ENCODE measurements at regions of chr7 and their contacts with region 1.

Region 1: DNA sequence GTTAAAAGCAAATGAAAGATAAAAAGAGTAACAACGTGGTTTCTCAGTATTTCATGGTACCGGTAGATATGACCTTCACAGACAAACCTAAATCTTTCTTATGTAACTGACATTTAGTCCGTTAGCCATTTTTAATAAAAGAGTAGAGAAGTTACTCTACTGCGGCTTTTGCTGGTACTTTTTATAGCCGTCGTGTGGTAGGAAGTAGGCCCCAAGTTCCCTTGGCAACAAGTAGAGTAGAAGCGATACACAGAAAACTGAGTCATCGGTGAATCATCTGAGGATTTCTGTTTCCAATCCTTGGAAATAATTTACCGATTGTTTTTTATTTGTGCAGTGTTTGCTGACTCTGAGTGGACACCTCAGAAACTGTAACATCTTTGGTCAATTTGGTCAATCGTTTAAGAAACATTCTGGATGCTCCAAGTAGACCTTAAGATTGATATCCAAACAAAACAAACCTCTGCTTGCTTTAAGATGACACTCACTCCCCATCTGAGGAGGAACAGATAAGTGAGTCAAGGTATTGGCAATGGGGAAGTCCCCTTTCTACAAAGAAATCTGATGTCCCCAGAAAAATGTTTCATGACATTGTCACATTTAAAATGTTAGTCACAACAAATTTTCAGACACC is 63.9 kb upstream of the AHR start:
- DNase-seq: peak; percentile 84 to 92 (median 87)
- H3K4me3 ChIP-seq: peak overlapping the region; percentile 8 to 19
- H3K4me3 Mint-ChIP-seq: peak overlapping the region; percentile 73 to 89 (median 84)
- H3K27ac ChIP-seq: peak overlapping the region; percentile 93
- H3K27ac Mint-ChIP-seq: peak overlapping the region; percentile 98 to 100 (median 99)
- H3K4me1 ChIP-seq: peaks cover 34% of the 10 kb centered on the region
- H3K4me1 Mint-ChIP-seq: peaks cover 32 to 51% (median 39%) of the 10 kb centered on the region in 4 donors
- H3K27me3 ChIP-seq: no peaks in the 10 kb centered on the region
- H3K27me3 Mint-ChIP-seq: no peaks in the 10 kb centered on the region

Region 2: GRCh38 chr7:16420649-16421332 is 813.7 kb before region 1 on chr7:
- CTCF ChIA-PET with region 1: no interaction called
- POLR2A ChIA-PET with region 1: no interaction called
- intact Hi-C with region 1: loop called (anchors 2 kb)
- DNase-seq: peak; percentile 87 to 89 (median 88)
- H3K4me3 ChIP-seq: peak overlapping the region; percentile 50 to 63
- H3K4me3 Mint-ChIP-seq: peak overlapping the region; percentile 81 to 94 (median 88)
- H3K27ac ChIP-seq: peak overlapping the region; percentile 64
- H3K27ac Mint-ChIP-seq: peak overlapping the region; percentile 82 to 97 (median 95)
- H3K4me1 ChIP-seq: peaks cover 15% of the 10 kb centered on the region
- H3K4me1 Mint-ChIP-seq: peaks cover 10 to 32% (median 21%) of the 10 kb centered on the region in 4 donors
- H3K27me3 ChIP-seq: no peaks in the 10 kb centered on the region
- H3K27me3 Mint-ChIP-seq: peaks cover 0 to 8% of the 10 kb centered on the region in 2 donors

Region 3: DNA sequence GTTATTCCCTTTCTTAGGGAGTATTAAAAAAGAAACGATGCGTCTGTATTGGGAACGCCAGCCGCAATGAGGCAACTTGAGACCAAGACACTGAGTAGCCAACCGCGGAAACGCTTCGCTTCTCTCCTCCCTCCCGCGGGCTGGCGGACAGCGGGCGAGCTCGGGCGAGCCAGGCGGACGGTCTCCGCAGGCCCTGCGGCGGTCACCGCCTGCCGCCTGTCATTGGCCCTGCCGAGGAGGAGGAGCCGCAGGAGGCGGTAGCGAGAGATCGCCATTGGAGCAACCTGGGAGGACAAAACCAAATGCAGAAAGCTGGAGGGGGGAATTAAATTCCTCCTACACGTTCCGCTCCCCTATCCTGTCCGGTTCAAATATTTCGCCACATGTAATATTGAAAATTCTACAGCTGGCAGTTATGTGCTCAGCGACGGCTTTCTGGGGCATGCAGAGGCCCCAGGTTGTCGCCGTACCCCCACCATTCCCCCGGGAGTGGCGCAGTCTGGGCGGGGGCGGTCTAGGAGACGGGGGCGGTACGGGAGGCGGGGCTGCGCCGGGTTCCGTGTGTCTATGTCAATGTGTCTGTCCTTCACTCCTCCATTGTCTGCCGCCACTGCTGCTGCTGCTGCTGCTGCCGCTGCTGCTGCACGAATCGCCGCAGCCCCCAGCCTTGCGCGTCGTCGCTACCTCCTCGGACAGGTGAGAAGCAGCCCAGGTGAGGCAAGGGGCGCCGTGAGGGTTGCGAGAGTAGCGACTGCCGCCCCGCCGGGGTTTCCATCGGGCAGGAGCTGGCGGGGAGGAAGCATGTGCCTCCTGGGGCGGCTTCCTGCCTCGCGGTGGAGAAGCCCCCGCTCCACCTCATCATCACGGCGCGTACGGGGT is 588.7 kb before region 1 on chr7 and contains the starts of genes ANKMY2 and BZW2:
- CTCF ChIA-PET with region 1: no interaction called
- POLR2A ChIA-PET with region 1: no interaction called
- intact Hi-C with region 1: loop called (anchors 10 kb)
- DNase-seq: peak; percentile 93 to 96 (median 95)
- H3K4me3 ChIP-seq: peak within 1 kb of the TSS; percentile 89 to 96
- H3K4me3 Mint-ChIP-seq: peak within 1 kb of the TSS; percentile 97 to 100 (median 100)
- H3K27ac ChIP-seq: peak within 1 kb of the TSS; percentile 74
- H3K27ac Mint-ChIP-seq: peak within 1 kb of the TSS; percentile 94 to 99 (median 99)
- H3K4me1 ChIP-seq: peaks cover 49% of the 10 kb centered on the region
- H3K4me1 Mint-ChIP-seq: peaks cover 41 to 69% (median 53%) of the 10 kb centered on the region in 4 donors
- H3K27me3 ChIP-seq: no peaks in the 10 kb centered on the region
- H3K27me3 Mint-ChIP-seq: no peaks in the 10 kb centered on the region
- total RNA-seq, gene ANKMY2: 13.6 to 20.3 TPM
- total RNA-seq, gene BZW2: 18.6 to 18.7 TPM

Region 4: DNA sequence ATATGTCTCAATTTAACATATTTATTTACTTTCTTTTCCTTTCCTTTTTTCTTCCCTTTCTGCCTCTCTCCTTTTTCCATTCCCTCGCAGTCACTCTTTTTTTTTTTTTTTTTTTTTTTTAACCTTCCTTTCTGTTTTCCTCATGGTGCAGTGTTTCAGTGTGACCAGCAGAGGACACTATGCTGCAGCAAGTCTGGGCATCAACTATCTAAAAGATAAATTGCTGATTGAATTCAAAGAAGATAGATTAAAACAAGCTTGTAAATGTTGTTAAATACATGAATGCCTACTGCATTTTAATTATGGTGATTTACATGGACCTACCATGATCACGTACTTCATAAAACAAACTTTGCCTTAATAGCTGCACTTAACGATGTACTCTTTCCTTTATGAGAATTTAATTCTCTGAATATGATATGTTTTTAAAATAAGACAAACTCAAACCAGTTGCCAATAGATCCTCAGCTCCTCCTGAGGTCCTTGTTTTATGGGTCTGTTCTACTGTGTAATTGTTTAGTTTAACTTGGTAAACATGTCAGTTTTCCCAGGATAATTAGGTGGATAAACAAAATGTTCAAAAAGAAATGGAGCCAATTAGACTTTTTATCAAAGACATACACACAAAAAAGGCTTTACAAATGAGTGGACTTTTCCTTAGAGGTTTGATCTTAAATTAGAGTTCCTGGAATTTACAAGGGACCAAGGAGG is 251.7 kb before region 1 on chr7:
- CTCF ChIA-PET with region 1: interaction called, 5 read pairs
- POLR2A ChIA-PET with region 1: no interaction called
- intact Hi-C with region 1: loop called (anchors 2 kb)
- DNase-seq: peak; percentile 37 to 51 (median 42)
- H3K4me3 ChIP-seq: no peak overlapping the region
- H3K4me3 Mint-ChIP-seq: peak overlapping the region in 6 of 8 donors; percentile 10 to 73 (median 43)
- H3K27ac ChIP-seq: no peak overlapping the region
- H3K27ac Mint-ChIP-seq: peak overlapping the region in 3 of 7 donors; percentile 4 to 25 (median 11)
- H3K4me1 ChIP-seq: no peaks in the 10 kb centered on the region
- H3K4me1 Mint-ChIP-seq: peaks cover 0 to 3% (median 1%) of the 10 kb centered on the region in 4 donors
- H3K27me3 ChIP-seq: no peaks in the 10 kb centered on the region
- H3K27me3 Mint-ChIP-seq: peaks cover 2 to 5% of the 10 kb centered on the region in 2 donors

Region 5: GRCh38 chr7:17144322-17144721 is 90.2 kb before region 1 on chr7:
- CTCF ChIA-PET with region 1: interaction called, 3 read pairs
- POLR2A ChIA-PET with region 1: interaction called, 6 read pairs
- intact Hi-C with region 1: loop called (anchors 2 kb)
- DNase-seq: peak; percentile 32 to 85 (median 36)
- H3K4me3 ChIP-seq: peak overlapping the region in 1 of 2 donors; percentile 27
- H3K4me3 Mint-ChIP-seq: peak overlapping the region in 7 of 8 donors; percentile 59 to 83 (median 78)
- H3K27ac ChIP-seq: no peak overlapping the region
- H3K27ac Mint-ChIP-seq: peak overlapping the region; percentile 36 to 90 (median 82)
- H3K4me1 ChIP-seq: peaks cover 58% of the 10 kb centered on the region
- H3K4me1 Mint-ChIP-seq: peaks cover 37 to 51% (median 40%) of the 10 kb centered on the region in 4 donors
- H3K27me3 ChIP-seq: no peaks in the 10 kb centered on the region
- H3K27me3 Mint-ChIP-seq: no peaks in the 10 kb centered on the region

Region 6: DNA sequence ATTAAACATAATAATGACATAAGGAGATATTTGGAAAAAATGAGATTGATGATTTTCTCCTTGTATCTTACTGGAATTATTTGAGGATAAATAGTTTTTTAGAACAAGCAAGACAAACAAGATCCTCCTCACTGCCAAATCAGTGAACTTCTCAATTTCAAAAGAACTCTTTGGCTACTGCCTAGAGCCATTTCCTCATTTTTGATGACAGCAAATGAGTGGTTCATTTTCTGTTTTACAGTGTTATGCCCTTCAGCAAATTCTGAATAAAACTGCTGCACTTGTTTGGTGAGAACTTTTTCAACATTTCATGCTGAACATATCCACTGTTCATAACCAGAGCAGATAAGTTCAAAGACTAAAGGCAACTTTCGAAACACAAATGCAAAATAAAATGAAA is 21.4 kb after region 1 on chr7:
- CTCF ChIA-PET with region 1: no interaction called
- POLR2A ChIA-PET with region 1: interaction called, 3 read pairs
- intact Hi-C with region 1: loop called (anchors 2 kb)
- DNase-seq: no peak
- H3K4me3 ChIP-seq: no peak overlapping the region
- H3K4me3 Mint-ChIP-seq: no peak overlapping the region
- H3K27ac ChIP-seq: no peak overlapping the region
- H3K27ac Mint-ChIP-seq: no peak overlapping the region
- H3K4me1 ChIP-seq: peaks cover 3% of the 10 kb centered on the region
- H3K4me1 Mint-ChIP-seq: peaks cover 0 to 3% (median 1%) of the 10 kb centered on the region in 4 donors
- H3K27me3 ChIP-seq: no peaks in the 10 kb centered on the region
- H3K27me3 Mint-ChIP-seq: no peaks in the 10 kb centered on the region

Region 7: DNA sequence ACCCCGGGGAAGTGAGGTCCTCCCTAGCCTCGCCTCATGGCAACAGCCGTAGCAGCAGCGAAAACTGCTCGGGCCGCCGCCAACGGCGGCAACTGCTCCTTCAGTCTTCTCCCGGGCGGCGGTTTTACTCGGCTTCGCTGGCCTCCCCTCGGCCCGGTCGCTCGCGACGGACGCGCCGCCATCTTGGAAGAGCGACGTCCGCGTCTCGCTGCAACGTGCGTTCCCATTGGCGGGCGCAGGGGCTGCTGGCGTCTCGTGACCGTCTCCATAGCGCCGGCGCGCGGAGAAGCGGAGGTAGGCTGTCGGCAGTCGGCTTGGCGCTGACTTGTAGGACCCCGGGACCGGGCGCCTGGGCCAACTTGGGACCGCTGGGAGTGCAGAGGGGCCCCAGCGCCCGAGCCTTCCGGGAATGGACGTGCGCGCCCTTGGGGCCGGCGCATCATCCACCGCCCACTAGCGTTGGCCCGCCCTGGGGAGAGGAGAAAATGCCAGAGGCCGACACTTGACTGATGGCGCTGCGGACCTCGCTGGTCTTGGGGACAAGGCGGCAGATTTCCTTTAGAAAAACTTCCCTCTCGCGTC is 705.9 kb after region 1 on chr7 and contains the start of gene SNX13:
- CTCF ChIA-PET with region 1: no interaction called
- POLR2A ChIA-PET with region 1: no interaction called
- intact Hi-C with region 1: loop called (anchors 10 kb)
- DNase-seq: peak; percentile 86 to 91 (median 88)
- H3K4me3 ChIP-seq: peak within 1 kb of the TSS; percentile 82 to 85
- H3K4me3 Mint-ChIP-seq: peak within 1 kb of the TSS; percentile 89 to 99 (median 97)
- H3K27ac ChIP-seq: peak within 1 kb of the TSS; percentile 90
- H3K27ac Mint-ChIP-seq: peak within 1 kb of the TSS; percentile 89 to 99 (median 99)
- H3K4me1 ChIP-seq: peaks cover 39% of the 10 kb centered on the region
- H3K4me1 Mint-ChIP-seq: peaks cover 29 to 59% (median 43%) of the 10 kb centered on the region in 4 donors
- H3K27me3 ChIP-seq: no peaks in the 10 kb centered on the region
- H3K27me3 Mint-ChIP-seq: no peaks in the 10 kb centered on the region
- total RNA-seq, gene SNX13: 34.6 to 36.0 TPM

Measured in CD4-positive, alpha-beta memory T cell (primary cell).